ENCODE measurements at regions of chr4 and their contacts with region 1.

Region 1: DNA sequence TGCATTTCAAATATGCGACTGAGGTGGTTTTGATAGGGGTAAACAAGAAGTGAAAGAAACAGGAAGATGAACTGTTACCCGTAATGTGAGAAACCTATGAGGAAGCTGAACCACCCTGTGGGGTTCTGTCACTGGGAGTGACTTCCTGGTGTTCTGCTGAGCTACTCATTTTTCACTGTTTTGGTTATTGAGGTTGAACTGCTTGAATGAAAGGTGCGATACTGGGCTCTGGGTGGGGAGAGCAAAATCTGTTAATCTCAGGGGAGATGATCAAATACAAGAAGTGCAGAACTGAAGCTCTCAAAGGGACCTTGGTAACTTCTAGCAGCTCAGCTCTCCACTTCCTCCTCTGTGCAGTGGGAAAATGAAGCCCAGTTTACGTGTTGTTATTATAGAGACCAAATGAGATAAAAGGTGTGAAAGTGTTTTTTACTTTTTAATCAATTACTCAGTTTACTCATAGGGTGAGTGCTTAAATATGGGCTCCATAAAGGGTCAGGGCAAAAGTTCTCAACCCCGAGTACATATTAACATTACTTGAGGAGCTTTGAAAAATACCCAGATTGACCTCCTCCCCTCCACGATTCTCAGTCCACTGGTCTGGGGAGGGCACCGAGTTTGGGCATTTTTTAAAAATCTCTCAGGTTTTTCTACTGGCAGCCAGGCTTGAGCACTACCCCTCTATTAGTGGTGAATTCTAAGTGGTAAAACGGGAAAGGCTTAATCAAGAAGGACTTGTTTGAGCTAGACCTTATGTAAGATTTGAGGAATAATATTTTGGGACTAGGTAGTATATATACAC is 66.7 kb downstream of the COQ2 start:
- DNase-seq: peak; percentile 95
- ATAC-seq: peak; percentile 90
- H3K4me3 ChIP-seq: peak overlapping the region in 3 of 5 experiments; percentile 6 to 37 (median 30)
- H3K4me3 Mint-ChIP-seq: peak overlapping the region; percentile 24
- H3K27ac ChIP-seq: peak overlapping the region; percentile 88 to 94
- H3K27ac Mint-ChIP-seq: peak overlapping the region; percentile 92
- H3K4me1 ChIP-seq: peaks cover 90 to 94% of the 10 kb centered on the region in 2 donors
- H3K4me1 Mint-ChIP-seq: peaks cover 87% of the 10 kb centered on the region
- H3K27me3 ChIP-seq: no peaks in the 10 kb centered on the region
- H3K27me3 Mint-ChIP-seq: no peaks in the 10 kb centered on the region
- CTCF ChIP-seq: no peak

Region 2: DNA sequence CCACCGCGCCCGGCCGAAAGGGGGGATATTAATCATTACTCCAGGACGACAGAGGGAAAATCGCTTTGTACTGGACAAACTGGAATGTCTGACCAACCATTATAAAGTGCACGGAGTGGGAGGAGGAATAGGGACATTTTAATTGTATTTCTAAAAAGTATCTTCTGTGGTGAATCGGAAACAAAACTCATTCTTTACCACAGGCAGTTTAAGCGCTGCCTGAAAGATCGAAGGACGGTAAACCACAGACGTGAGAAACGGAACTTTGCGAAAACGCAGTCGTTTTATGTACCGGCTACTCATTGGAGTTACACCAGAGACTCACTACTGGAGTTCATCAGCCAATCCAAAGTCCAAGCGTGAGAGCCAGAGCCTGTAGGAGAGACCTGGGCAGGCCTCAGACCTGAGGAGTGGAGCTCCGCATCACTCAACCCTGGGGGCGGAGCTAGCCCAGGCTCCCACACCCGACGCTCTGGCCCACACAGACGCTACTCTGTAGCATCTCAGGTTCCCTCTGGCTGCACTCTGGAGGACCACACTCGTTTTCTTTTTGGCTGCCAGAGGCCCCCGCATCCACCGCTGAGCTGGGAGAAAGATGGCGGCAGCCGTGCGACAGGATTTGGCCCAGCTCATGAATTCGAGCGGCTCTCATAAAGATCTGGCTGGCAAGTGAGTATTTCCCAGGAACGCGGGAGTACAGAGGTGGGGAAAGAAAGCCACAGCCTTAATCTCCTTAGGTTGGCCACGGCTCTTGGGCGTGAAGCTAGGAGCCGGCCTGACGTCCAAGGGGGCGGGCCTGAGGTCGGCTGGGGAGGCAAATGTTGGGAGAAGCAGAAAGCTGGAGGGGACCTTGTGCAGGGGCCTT is 183.1 kb before region 1 on chr4 and contains the start of gene COPS4:
- CTCF ChIA-PET with region 1: no interaction called
- POLR2A ChIA-PET with region 1: no interaction called
- intact Hi-C with region 1: no loop called
- DNase-seq: peak; percentile 99
- ATAC-seq: peak; percentile 95
- H3K4me3 ChIP-seq: peak within 1 kb of the TSS; percentile 80 to 94 (median 91)
- H3K4me3 Mint-ChIP-seq: peak within 1 kb of the TSS; percentile 98
- H3K27ac ChIP-seq: peak within 1 kb of the TSS; percentile 84 to 86
- H3K27ac Mint-ChIP-seq: peak within 1 kb of the TSS; percentile 98
- H3K4me1 ChIP-seq: peaks cover 10 to 16% of the 10 kb centered on the region in 2 donors
- H3K4me1 Mint-ChIP-seq: peaks cover 34% of the 10 kb centered on the region
- H3K27me3 ChIP-seq: no peaks in the 10 kb centered on the region
- H3K27me3 Mint-ChIP-seq: no peaks in the 10 kb centered on the region
- CTCF ChIP-seq: peak; percentile 34
- total RNA-seq, gene COPS4: 24.5 and 32.8 TPM in 2 replicates

Region 3: GRCh38 chr4:83231620-83232076 is 13.7 kb after region 1 on chr4:
- CTCF ChIA-PET with region 1: no interaction called
- POLR2A ChIA-PET with region 1: no interaction called
- intact Hi-C with region 1: loop called (anchors 1 kb)
- DNase-seq: peak; percentile 57
- ATAC-seq: peak; percentile 58
- H3K4me3 ChIP-seq: no peak overlapping the region
- H3K4me3 Mint-ChIP-seq: peak overlapping the region; percentile 59
- H3K27ac ChIP-seq: peak overlapping the region in 1 of 2 donors; percentile 5
- H3K27ac Mint-ChIP-seq: peak overlapping the region; percentile 81
- H3K4me1 ChIP-seq: peaks cover 29 to 39% of the 10 kb centered on the region in 2 donors
- H3K4me1 Mint-ChIP-seq: peaks cover 53% of the 10 kb centered on the region
- H3K27me3 ChIP-seq: no peaks in the 10 kb centered on the region
- H3K27me3 Mint-ChIP-seq: no peaks in the 10 kb centered on the region
- CTCF ChIP-seq: no peak

Region 4: DNA sequence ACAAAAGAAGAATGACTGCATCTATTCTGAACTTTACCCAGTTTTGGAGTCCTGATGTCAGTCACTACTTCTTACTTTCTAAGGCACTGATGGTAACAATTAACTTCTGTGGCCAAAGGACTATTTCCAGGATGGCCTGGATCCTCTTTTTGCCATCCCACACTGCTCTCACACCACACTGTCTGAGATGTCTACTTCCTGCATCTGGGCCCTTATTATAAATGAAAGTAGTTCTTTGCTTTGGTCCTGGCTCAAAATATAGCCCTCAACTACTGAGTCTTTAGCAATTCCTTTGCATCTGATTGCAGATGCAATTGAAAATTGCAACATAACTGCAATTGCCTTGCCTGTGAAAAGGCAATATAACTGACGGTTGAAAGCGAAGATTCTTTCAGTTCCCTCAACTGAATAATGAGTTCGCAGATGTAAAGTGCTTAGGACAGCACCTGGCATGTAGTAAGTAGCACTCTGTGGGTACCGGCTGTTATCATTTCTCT is 22.5 kb after region 1 on chr4:
- CTCF ChIA-PET with region 1: no interaction called
- POLR2A ChIA-PET with region 1: no interaction called
- intact Hi-C with region 1: loop called (anchors 2 kb)
- DNase-seq: peak; percentile 63
- ATAC-seq: peak; percentile 76
- H3K4me3 ChIP-seq: peak overlapping the region in 2 of 5 experiments; percentile 5 to 20
- H3K4me3 Mint-ChIP-seq: peak overlapping the region; percentile 62
- H3K27ac ChIP-seq: peak overlapping the region; percentile 8 to 57
- H3K27ac Mint-ChIP-seq: peak overlapping the region; percentile 80
- H3K4me1 ChIP-seq: peaks cover 23 to 38% of the 10 kb centered on the region in 2 donors
- H3K4me1 Mint-ChIP-seq: peaks cover 65% of the 10 kb centered on the region
- H3K27me3 ChIP-seq: no peaks in the 10 kb centered on the region
- H3K27me3 Mint-ChIP-seq: no peaks in the 10 kb centered on the region
- CTCF ChIP-seq: no peak

Region 5: DNA sequence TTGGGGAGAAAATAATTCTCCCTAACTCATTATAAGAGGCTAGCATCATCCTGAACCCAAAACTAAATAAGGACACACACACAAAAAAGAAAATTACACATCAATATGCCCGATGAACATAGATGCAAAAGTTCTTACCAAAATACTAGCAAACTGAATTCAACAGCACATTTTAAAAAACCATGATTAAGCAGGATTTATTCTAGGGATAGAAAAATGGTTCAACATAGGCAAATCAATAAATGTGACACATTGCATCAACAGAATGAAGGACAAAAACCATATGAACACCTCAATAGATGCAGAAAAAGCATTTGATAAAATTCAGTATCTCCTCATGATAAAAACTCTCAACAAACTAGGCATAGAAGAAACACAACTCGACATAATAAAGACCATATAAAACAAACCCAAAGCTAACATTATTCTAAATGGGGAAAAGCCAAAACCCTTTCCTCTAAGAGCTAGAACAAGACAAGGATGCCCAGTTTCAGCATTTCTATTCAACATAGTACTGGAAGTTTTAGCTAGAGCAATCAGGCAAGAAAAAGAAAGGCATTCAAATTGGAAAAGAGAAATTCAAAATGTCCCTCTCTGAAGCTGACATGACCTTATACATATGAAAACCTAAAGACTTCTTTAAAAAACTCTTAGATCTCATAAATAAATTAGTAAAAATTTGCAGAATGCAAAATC is 1080.2 kb after region 1 on chr4:
- CTCF ChIA-PET with region 1: no interaction called
- POLR2A ChIA-PET with region 1: no interaction called
- intact Hi-C with region 1: no loop called
- DNase-seq: no peak
- ATAC-seq: no peak
- H3K4me3 ChIP-seq: no peak overlapping the region
- H3K4me3 Mint-ChIP-seq: no peak overlapping the region
- H3K27ac ChIP-seq: no peak overlapping the region
- H3K27ac Mint-ChIP-seq: no peak overlapping the region
- H3K4me1 ChIP-seq: no peaks in the 10 kb centered on the region
- H3K4me1 Mint-ChIP-seq: no peaks in the 10 kb centered on the region
- H3K27me3 ChIP-seq: no peaks in the 10 kb centered on the region
- H3K27me3 Mint-ChIP-seq: no peaks in the 10 kb centered on the region
- CTCF ChIP-seq: no peak